ENCODE measurements at regions of chr10 and their contacts with region 1.

Region 1: GRCh38 chr10:15433850-15434537 is 62.9 kb upstream of the FAM171A1 start:
- DNase-seq: no peak
- ATAC-seq: peak; percentile 72 to 76

Region 2: GRCh38 chr10:14102056-14102455 is 1331.9 kb before region 1 on chr10:
- intact Hi-C with region 1: no loop called
- DNase-seq: no peak
- ATAC-seq: no peak

Region 3: GRCh38 chr10:15344876-15345285 is 89.1 kb before region 1 on chr10:
- intact Hi-C with region 1: no loop called
- DNase-seq: no peak
- ATAC-seq: peak in 1 of 2 donors; percentile 63

Region 4: GRCh38 chr10:15605740-15606369 is 171.9 kb after region 1 on chr10:
- intact Hi-C with region 1: no loop called
- DNase-seq: no peak
- ATAC-seq: no peak

Region 5: GRCh38 chr10:15719899-15720634 is 286.1 kb after region 1 on chr10 and contains the start of gene ITGA8:
- intact Hi-C with region 1: loop called (anchors 5 to 10 kb)
- DNase-seq: no peak
- ATAC-seq: peak; percentile 75 to 78
- total RNA-seq, gene ITGA8: 2.7 to 4.5 TPM

Region 6: DNA sequence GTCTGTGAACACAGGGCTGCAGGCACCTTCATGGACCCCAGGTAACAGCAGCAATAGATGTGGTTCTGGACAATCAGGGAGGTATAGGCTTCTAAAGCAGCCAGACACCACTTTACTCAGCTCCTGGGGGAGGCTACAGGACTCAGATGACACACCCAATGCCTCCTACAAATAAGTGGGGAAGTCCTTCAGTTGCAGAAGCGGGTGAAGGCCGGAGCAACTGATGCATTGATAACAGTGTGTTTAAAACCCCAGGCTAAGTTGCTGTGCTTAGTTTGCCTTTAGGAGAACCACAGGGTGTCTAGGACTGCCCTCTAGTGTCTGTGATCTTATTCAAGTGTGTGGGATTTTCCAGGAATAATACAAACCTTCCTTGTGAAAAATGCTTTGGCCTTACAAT is 291.6 kb after region 1 on chr10:
- intact Hi-C with region 1: loop called in 1 of 2 experiments (anchors 5 kb)
- DNase-seq: no peak
- ATAC-seq: peak; percentile 60 to 78

Region 7: GRCh38 chr10:15824498-15824897 is 390.5 kb after region 1 on chr10:
- intact Hi-C with region 1: loop called (anchors 5 kb)
- DNase-seq: no peak
- ATAC-seq: no peak

Region 8: DNA sequence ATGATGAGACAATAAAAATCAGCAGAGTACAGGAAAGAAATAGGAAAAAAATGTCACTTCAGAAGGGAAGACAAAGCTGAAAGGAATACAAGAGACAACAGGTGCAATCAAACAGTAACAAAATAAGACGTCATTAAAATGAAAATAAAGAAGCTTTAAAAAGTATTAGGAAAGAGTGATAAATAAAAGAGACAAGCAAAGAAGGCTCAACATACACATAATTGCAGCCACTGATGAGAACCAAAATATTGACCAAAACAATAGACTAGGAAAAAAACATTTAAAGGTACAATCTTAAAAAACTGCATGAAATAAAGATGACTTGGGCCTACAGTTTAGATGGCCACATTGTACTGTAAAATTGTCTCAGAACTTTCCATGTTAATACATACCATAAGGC is 586.8 kb after region 1 on chr10:
- intact Hi-C with region 1: no loop called
- DNase-seq: no peak
- ATAC-seq: no peak